ENCODE measurements at regions of chr4 and their contacts with region 1.

Region 1: DNA sequence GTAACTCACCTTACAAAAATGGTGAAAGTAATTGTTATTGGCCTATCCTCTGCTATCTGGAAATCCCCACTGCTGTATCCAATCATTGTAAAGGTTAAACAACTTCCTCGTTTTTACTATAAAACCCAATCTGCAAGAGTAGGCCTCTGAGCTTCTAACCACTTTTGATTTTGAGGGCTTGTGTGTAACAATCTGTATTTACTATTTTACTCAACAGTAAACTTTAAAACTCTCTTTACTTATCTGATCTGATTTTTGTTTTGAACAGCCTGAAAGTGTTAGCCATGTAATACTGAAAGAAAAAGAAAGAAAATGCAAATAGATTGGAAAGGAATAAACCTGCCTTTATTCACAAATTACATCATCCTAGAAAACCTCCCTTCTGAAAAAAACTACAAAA is 63.1 kb downstream of the SLC10A7 start:
- DNase-seq: no peak
- ATAC-seq: peak; percentile 99
- H3K4me3 ChIP-seq: 0 out of 2 replicates have a peak overlapping the region, but pooled peaks have one; percentile 14
- H3K27ac ChIP-seq: peak overlapping the region; percentile 60
- H3K4me1 ChIP-seq: no peaks in the 10 kb centered on the region; the same call in 1 of the 2 replicates
- H3K27me3 ChIP-seq: no peaks in the 10 kb centered on the region
- CTCF ChIP-seq: no peak
- EP300 ChIP-seq: no peak
- POLR2A ChIP-seq: no peak
- RAD21 ChIP-seq: no peak

Region 2: GRCh38 chr4:146522098-146522868 is 63.7 kb after region 1 on chr4:
- CTCF ChIA-PET with region 1: no interaction called
- POLR2A ChIA-PET with region 1: no interaction called
- RAD21 ChIA-PET with region 1: no interaction called
- SMC1A ChIA-PET with region 1: interaction called, 4 read pairs
- in situ Hi-C with region 1: no loop called
- intact Hi-C with region 1: loop called (anchors 5 kb)
- DNase-seq: peak; percentile 46
- ATAC-seq: peak; percentile 82
- H3K4me3 ChIP-seq: peak overlapping the region; percentile 98
- H3K27ac ChIP-seq: peak overlapping the region; percentile 88
- H3K4me1 ChIP-seq: no peaks in the 10 kb centered on the region
- H3K27me3 ChIP-seq: no peaks in the 10 kb centered on the region
- CTCF ChIP-seq: no peak
- EP300 ChIP-seq: peak; percentile 33 to 47; a peak in 1 of 4 replicates
- POLR2A ChIP-seq: peak; percentile 83
- RAD21 ChIP-seq: no peak

Region 3: DNA sequence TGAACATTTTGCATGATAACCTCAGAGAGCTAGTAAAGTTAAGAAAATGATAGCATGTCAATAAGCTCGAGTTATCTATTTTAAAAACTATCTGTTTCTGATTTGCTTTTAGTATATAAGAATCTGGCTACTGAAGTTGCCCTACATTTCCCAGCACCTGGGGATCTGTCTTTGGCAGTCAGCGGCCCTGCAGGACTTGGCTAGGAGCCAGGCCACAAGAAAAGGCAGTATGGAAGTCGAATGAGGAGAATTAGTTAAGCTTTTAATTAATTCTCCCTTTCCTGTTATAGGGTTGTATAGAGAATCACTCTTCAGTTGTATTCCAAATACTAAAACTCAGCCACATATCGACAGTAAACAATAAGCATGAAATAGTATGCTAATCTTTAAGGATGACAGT is 202.8 kb after region 1 on chr4:
- CTCF ChIA-PET with region 1: no interaction called
- POLR2A ChIA-PET with region 1: no interaction called
- RAD21 ChIA-PET with region 1: no interaction called
- SMC1A ChIA-PET with region 1: no interaction called
- in situ Hi-C with region 1: no loop called
- intact Hi-C with region 1: no loop called
- DNase-seq: no peak
- ATAC-seq: no peak
- H3K4me3 ChIP-seq: no peak overlapping the region
- H3K27ac ChIP-seq: no peak overlapping the region
- H3K4me1 ChIP-seq: no peaks in the 10 kb centered on the region
- H3K27me3 ChIP-seq: no peaks in the 10 kb centered on the region
- CTCF ChIP-seq: no peak
- EP300 ChIP-seq: no peak
- POLR2A ChIP-seq: no peak
- RAD21 ChIP-seq: no peak